Activated CD4-positive, alpha-beta T cell treated with anti-CD3 and anti-CD28 coated beads, Interleukin-2, amount 10 ng/mL, durations not matched to agents 24 days and 14 days (primary cell): ENCODE measurements at regions of chr4 and their contacts with region 1.

Region 1: GRCh38 chr4:152679414-152680281 is at the start of gene TMEM154:
- DNase-seq: peak; percentile 94
- H3K4me3 Mint-ChIP-seq: peak within 1 kb of the TSS; percentile 87
- H3K27ac Mint-ChIP-seq: peak within 1 kb of the TSS; percentile 88
- H3K4me1 Mint-ChIP-seq: peaks cover 58% of the 10 kb centered on the region
- H3K27me3 Mint-ChIP-seq: no peaks in the 10 kb centered on the region
- total RNA-seq, gene TMEM154: 7.9 and 9.0 TPM in 2 replicates

Region 2: GRCh38 chr4:152408514-152409327 is 270.9 kb before region 1 on chr4:
- intact Hi-C with region 1: no loop called
- DNase-seq: peak; percentile 73
- H3K4me3 Mint-ChIP-seq: no peak overlapping the region
- H3K27ac Mint-ChIP-seq: no peak overlapping the region
- H3K4me1 Mint-ChIP-seq: peaks cover 4% of the 10 kb centered on the region
- H3K27me3 Mint-ChIP-seq: no peaks in the 10 kb centered on the region

Region 3: GRCh38 chr4:152696764-152697261 is 17.2 kb after region 1 on chr4:
- intact Hi-C with region 1: loop called (anchors 1 kb)
- DNase-seq: peak; percentile 84
- H3K4me3 Mint-ChIP-seq: peak overlapping the region; percentile 21
- H3K27ac Mint-ChIP-seq: no peak overlapping the region
- H3K4me1 Mint-ChIP-seq: peaks cover 15% of the 10 kb centered on the region
- H3K27me3 Mint-ChIP-seq: peaks cover 5% of the 10 kb centered on the region